ENCODE measurements at regions of chr22 and their contacts with region 1.

Region 1: GRCh38 chr22:22060200-22061084 is 77.9 kb upstream of the TOP3B start:
- DNase-seq: peak; percentile 46
- H3K4me3 Mint-ChIP-seq: no peak overlapping the region
- H3K27ac Mint-ChIP-seq: no peak overlapping the region
- H3K4me1 Mint-ChIP-seq: no peaks in the 10 kb centered on the region
- H3K27me3 Mint-ChIP-seq: peaks cover 12% of the 10 kb centered on the region

Region 2: DNA sequence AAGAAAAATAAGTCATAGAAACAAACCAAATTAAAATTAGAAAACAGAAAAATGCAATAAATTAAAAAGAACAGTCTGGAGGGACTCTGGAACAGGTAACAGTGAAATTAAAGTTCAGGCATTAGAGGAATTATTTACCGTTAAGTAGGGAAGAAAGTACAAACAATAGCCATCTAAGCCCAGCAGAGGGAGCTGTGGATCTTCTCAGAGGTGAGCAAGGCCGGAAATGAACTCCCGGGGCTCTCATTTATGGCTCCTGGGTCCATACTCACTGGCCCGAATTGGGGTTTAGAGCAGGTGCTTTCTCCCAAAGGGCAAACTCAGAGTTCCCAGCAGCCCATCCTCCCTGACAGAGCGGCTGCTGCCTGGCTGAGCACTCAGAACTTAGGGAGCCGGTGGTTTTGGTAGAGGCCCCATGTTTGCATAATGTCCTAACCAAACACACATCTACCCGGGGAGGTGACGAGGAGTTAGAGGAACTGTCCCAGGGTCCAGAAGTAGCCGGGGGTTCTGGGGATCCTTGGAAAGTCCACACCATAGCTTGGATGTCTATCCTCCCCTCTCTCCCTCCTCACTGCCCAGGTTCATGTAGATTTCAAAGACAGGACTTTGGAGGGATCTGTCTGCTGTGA is 96.4 kb after region 1 on chr22:
- intact Hi-C with region 1: loop called (anchors 1 kb)
- DNase-seq: peak; percentile 48
- H3K4me3 Mint-ChIP-seq: no peak overlapping the region
- H3K27ac Mint-ChIP-seq: peak overlapping the region; percentile 51
- H3K4me1 Mint-ChIP-seq: peaks cover 4% of the 10 kb centered on the region
- H3K27me3 Mint-ChIP-seq: peaks cover 16% of the 10 kb centered on the region

Region 3: GRCh38 chr22:22195265-22196017 is 135.0 kb after region 1 on chr22:
- intact Hi-C with region 1: loop called (anchors 1 kb)
- DNase-seq: peak; percentile 64
- H3K4me3 Mint-ChIP-seq: no peak overlapping the region
- H3K27ac Mint-ChIP-seq: no peak overlapping the region
- H3K4me1 Mint-ChIP-seq: no peaks in the 10 kb centered on the region
- H3K27me3 Mint-ChIP-seq: peaks cover 27% of the 10 kb centered on the region

Measured in activated T-helper 1 cell treated with anti-CD3 and anti-CD28 coated beads, Interleukin-12 subunit alpha, Interleukin-12 subunit beta, Interleukin-2, Interleukin-4 antibody, amounts not matched to agents 30 ng/mL and 10 ng/mL and 1 ng/mL, durations not matched to agents 14 hours and 24 hours and 36 hours (primary cell).